ENCODE measurements at regions of chr5 and their contacts with region 1.

Region 1: GRCh38 chr5:149782018-149782894 is 52.1 kb downstream of the PPARGC1B start:
- DNase-seq: no peak
- H3K4me3 ChIP-seq: no peak overlapping the region
- H3K27ac ChIP-seq: no peak overlapping the region
- H3K4me1 ChIP-seq: peaks cover 38% of the 10 kb centered on the region
- H3K27me3 ChIP-seq: no peaks in the 10 kb centered on the region
- CTCF ChIP-seq: no peak

Region 2: GRCh38 chr5:149418910-149419531 is 363.2 kb before region 1 on chr5:
- CTCF ChIA-PET with region 1: interaction called, 12 read pairs
- POLR2A ChIA-PET with region 1: no interaction called
- intact Hi-C with region 1: no loop called
- DNase-seq: no peak
- H3K4me3 ChIP-seq: no peak overlapping the region
- H3K27ac ChIP-seq: no peak overlapping the region
- H3K4me1 ChIP-seq: no peaks in the 10 kb centered on the region
- H3K27me3 ChIP-seq: peaks cover 7% of the 10 kb centered on the region; the same call in 1 of the 2 replicates
- CTCF ChIP-seq: no peak

Region 3: GRCh38 chr5:149719678-149720077 is 62.6 kb before region 1 on chr5:
- CTCF ChIA-PET with region 1: no interaction called
- POLR2A ChIA-PET with region 1: no interaction called
- intact Hi-C with region 1: loop called (anchors 5 kb)
- DNase-seq: peak; percentile 78 to 88
- H3K4me3 ChIP-seq: no peak overlapping the region
- H3K27ac ChIP-seq: no peak overlapping the region
- H3K4me1 ChIP-seq: peaks cover 10% of the 10 kb centered on the region
- H3K27me3 ChIP-seq: peaks cover 4% of the 10 kb centered on the region; the same call in 1 of the 2 replicates
- CTCF ChIP-seq: no peak

Region 4: GRCh38 chr5:149749481-149750365 is 32.5 kb before region 1 on chr5:
- CTCF ChIA-PET with region 1: no interaction called
- POLR2A ChIA-PET with region 1: interaction called, 8 read pairs
- intact Hi-C with region 1: loop called (anchors 1 kb)
- DNase-seq: peak in 1 of 2 experiments; percentile 48
- H3K4me3 ChIP-seq: no peak overlapping the region
- H3K27ac ChIP-seq: peak overlapping the region; percentile 24
- H3K4me1 ChIP-seq: peaks cover 59% of the 10 kb centered on the region
- H3K27me3 ChIP-seq: no peaks in the 10 kb centered on the region
- CTCF ChIP-seq: no peak

Region 5: GRCh38 chr5:149878039-149878747 is 95.9 kb after region 1 on chr5:
- CTCF ChIA-PET with region 1: no interaction called
- POLR2A ChIA-PET with region 1: no interaction called
- intact Hi-C with region 1: no loop called
- DNase-seq: no peak
- H3K4me3 ChIP-seq: no peak overlapping the region
- H3K27ac ChIP-seq: no peak overlapping the region
- H3K4me1 ChIP-seq: peaks cover 6% of the 10 kb centered on the region; the same call in 1 of the 2 replicates
- H3K27me3 ChIP-seq: no peaks in the 10 kb centered on the region
- CTCF ChIP-seq: no peak